AG04449 (cell line): ENCODE measurements at regions of chr1 and their contacts with region 1.

Region 1: GRCh38 chr1:207004981-207005830 is 27.4 kb downstream of the C1orf116 start:
- DNase-seq: no peak
- H3K4me3 ChIP-seq: no peak overlapping the region
- CTCF ChIP-seq: peak; percentile 86

Region 2: DNA sequence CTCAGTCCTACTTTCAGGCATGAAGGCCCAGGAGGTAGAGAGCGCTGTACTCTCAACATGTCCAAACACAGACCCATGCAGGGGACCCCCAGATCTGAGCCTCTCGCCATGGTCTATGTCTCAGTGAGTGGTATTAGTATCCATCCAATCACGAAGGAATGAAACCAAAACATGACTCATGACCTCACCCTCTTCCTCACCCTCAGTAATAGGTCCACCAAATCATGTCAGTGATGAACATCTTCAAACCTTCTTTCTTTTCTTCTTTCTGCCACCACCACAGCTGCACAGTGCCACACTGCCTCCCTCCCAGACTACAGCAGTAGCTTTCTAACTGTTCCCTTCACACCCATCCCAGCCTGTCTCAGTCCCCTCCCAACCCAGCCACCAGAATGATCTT is 10.6 kb after region 1 on chr1:
- CTCF ChIA-PET with region 1: interaction called, 92 read pairs
- POLR2A ChIA-PET with region 1: no interaction called
- DNase-seq: no peak
- H3K4me3 ChIP-seq: no peak overlapping the region
- CTCF ChIP-seq: no peak

Region 3: DNA sequence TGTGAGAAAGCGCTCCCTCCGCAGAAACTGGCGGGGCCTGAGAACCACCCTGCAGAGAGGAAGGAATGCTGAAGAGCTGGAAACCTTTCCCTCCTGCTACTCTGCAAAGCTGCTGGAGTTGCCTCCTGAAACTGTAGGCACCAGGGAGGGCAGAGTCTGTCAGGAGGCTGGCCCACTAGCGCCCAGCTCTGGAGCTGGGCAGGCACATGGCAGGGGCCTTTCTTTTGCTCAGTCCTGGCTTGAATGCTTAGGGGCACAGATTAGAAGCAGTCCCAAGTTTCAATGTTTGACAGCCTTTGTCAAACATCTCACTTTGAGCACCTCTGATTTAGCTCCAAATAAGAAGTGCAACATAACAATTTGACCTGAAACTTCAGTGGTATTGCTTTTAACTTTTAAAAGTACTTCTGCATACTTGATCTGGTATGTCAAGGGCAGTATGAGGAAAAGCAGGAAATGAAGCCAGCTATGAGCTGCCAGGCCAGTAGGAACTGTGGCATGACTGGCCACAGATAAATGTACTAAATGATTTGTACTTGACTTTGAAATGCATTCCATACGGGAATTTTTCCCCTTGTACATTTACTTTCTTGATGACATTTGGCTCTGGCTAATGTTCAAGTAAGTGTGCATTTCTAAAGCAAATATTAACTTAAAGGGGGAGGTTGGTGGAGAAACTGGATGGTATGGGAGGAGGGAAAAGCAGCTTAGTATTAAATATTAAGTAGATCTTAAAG is 20.1 kb after region 1 on chr1:
- CTCF ChIA-PET with region 1: interaction called, 92 read pairs
- POLR2A ChIA-PET with region 1: no interaction called
- DNase-seq: no peak
- H3K4me3 ChIP-seq: no peak overlapping the region
- CTCF ChIP-seq: no peak

Region 4: GRCh38 chr1:207181838-207182237 is 176.6 kb after region 1 on chr1:
- CTCF ChIA-PET with region 1: no interaction called
- POLR2A ChIA-PET with region 1: no interaction called
- DNase-seq: no peak
- H3K4me3 ChIP-seq: no peak overlapping the region
- CTCF ChIP-seq: no peak